ENCODE measurements at regions of chr2 and their contacts with region 1.

Region 1: DNA sequence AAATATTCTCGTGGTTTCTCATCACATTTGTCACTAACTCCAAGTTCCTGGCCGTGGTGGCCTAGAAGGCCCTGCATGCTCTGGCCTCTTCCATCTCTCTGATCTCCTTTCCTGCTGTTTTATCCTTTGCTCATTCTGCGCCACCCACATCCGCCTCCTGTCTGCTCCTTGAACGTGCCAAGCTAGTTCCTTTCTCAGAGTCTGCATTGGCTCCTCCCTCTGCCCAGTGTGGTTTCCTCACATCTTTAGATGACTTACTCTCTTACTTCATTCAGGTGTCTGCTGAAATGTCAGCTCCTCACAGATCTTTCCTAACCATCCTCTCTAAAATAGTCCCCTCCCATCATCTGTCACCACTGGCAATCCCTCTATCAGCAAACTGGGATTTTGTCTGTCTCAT is 158.6 kb upstream of the RBMS1 start:
- DNase-seq: peak; percentile 40 to 49 (median 41)
- ATAC-seq: peak; percentile 72
- H3K4me3 ChIP-seq: no peak overlapping the region
- H3K4me1 ChIP-seq: no peaks in the 10 kb centered on the region
- CTCF ChIP-seq: no peak

Region 2: DNA sequence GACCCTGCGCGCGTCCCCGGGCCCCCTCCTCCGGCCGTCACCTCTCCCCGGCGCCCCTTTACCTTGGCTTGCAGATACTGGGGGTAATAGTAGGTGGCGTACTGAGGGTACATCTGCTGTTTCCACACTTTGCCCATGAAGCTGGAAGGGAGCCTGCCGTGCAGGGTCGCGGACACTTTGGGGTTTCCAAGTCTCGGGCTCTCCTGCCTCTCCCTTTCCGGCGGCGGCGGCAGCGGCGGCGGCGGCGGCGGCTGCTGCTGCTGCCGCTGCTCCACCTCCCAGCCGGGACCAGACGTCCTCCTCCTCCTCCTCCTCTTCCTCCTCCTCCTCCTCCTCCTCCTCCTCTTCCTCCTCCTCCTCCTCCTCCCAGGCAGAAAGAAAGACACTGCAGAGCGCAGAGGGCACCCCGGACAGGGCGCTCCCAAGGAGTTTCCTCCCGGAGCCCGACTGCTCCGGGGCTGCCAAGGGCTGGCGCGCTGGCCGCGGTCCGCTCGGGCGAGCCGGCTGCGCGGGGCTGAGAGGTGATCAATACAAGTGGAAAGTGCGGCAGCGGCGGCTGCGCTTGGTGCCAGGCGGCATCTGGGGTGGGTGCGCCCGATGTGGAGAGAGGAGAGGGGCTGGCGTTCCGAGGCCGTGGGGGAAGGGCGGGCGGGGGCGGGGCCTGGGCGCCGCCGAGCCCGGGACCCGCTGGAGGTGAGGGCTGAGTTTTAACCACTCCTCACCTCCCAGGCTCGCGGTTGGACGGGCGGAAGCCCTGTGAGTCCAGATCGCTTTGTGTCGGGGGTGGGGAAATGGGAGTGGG is 158.8 kb before region 1 on chr2 and contains the start of gene RBMS1:
- intact Hi-C with region 1: loop called in 1 of 2 experiments (anchors 10 kb)
- DNase-seq: peak; percentile 31 to 66 (median 63)
- ATAC-seq: peak; percentile 64
- H3K4me3 ChIP-seq: peak within 1 kb of the TSS; percentile 56
- H3K4me1 ChIP-seq: peaks cover 6% of the 10 kb centered on the region
- CTCF ChIP-seq: no peak
- total RNA-seq, gene RBMS1: 9.7 to 58.3 (median 21.6) TPM